H1 (cell line): ENCODE measurements at regions of chr22 and their contacts with region 1.

Region 1: GRCh38 chr22:42621505-42622002 is 6.9 kb upstream of the POLDIP3 start:
- DNase-seq: peak; percentile 86 to 94
- H3K4me3 ChIP-seq: no peak overlapping the region
- H3K27ac ChIP-seq: no peak overlapping the region
- H3K4me1 ChIP-seq: peaks cover 0 to 9% (median 7%) of the 10 kb centered on the region in 4 experiments; a peak in 6 of 7 replicates
- H3K27me3 ChIP-seq: no peaks in the 10 kb centered on the region
- CTCF ChIP-seq: peak; percentile 92 to 99 (median 98)
- EP300 ChIP-seq: no peak
- POLR2A ChIP-seq: no peak
- RAD21 ChIP-seq: peak; percentile 80 to 85

Region 2: GRCh38 chr22:42635531-42635930 is 14.0 kb after region 1 on chr22:
- CTCF ChIA-PET with region 1: interaction called, 43 read pairs
- POLR2A ChIA-PET with region 1: interaction called, 24 read pairs
- DNase-seq: no peak
- H3K4me3 ChIP-seq: no peak overlapping the region
- H3K27ac ChIP-seq: no peak overlapping the region
- H3K4me1 ChIP-seq: peaks cover 0 to 3% (median 1%) of the 10 kb centered on the region in 4 experiments; a peak in 2 of 7 replicates
- H3K27me3 ChIP-seq: no peaks in the 10 kb centered on the region
- CTCF ChIP-seq: no peak
- EP300 ChIP-seq: no peak
- POLR2A ChIP-seq: no peak
- RAD21 ChIP-seq: no peak

Region 3: GRCh38 chr22:42641801-42642413 is 20.4 kb after region 1 on chr22:
- CTCF ChIA-PET with region 1: interaction called, 33 read pairs
- POLR2A ChIA-PET with region 1: interaction called, 39 read pairs
- DNase-seq: no peak
- H3K4me3 ChIP-seq: no peak overlapping the region
- H3K27ac ChIP-seq: no peak overlapping the region
- H3K4me1 ChIP-seq: peaks cover 7 to 20% (median 14%) of the 10 kb centered on the region in 4 experiments
- H3K27me3 ChIP-seq: 0 out of 7 replicates have a peak, but pooled peaks cover 0 to 2% (median 0%) of the 10 kb centered on the region in 4 experiments
- CTCF ChIP-seq: no peak
- EP300 ChIP-seq: no peak
- POLR2A ChIP-seq: no peak
- RAD21 ChIP-seq: no peak

Region 4: GRCh38 chr22:42649246-42650099 is 27.9 kb after region 1 on chr22 and contains the start of gene CYB5R3:
- CTCF ChIA-PET with region 1: interaction called, 22 read pairs
- POLR2A ChIA-PET with region 1: interaction called, 74 read pairs
- DNase-seq: peak; percentile 50 to 90
- H3K4me3 ChIP-seq: peak within 1 kb of the TSS; percentile 82 to 98 (median 90)
- H3K27ac ChIP-seq: peak within 1 kb of the TSS; percentile 82; the same call in 1 of the 2 replicates
- H3K4me1 ChIP-seq: peaks cover 3 to 15% (median 11%) of the 10 kb centered on the region in 4 experiments
- H3K27me3 ChIP-seq: no peaks in the 10 kb centered on the region; a peak in 1 of 7 replicates
- CTCF ChIP-seq: no peak
- EP300 ChIP-seq: 0 out of 3 replicates have a peak, but pooled peaks of 1 of the 2 experiments have one; percentile 16
- POLR2A ChIP-seq: peak in 1 of 2 experiments; percentile 77; a peak in 2 of 3 replicates
- RAD21 ChIP-seq: no peak
- total RNA-seq, gene CYB5R3: 75.3 and 82.5 TPM in 2 replicates

Region 5: DNA sequence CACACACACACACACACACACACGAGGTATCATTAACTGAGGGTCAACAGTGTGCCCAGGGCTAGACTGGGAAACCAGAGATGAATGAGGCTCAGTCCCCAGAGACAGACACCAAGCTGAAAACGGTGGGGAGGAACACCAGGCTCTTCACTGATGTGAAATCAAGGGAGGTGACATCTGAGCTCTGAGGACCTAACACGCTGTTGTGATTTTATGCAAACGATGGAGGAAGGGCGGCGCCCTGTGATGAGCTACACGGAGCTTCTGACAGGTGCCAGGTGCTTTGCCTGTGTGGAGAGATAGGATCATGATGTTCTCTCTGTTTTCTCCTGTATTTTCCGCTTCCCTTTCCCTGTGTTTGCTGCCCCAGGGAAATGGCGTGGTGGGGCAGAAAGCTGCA is 34.1 kb after region 1 on chr22:
- CTCF ChIA-PET with region 1: interaction called, 22 read pairs
- POLR2A ChIA-PET with region 1: interaction called, 74 read pairs
- DNase-seq: no peak
- H3K4me3 ChIP-seq: no peak overlapping the region
- H3K27ac ChIP-seq: no peak overlapping the region
- H3K4me1 ChIP-seq: no peaks in the 10 kb centered on the region
- H3K27me3 ChIP-seq: no peaks in the 10 kb centered on the region
- CTCF ChIP-seq: no peak
- EP300 ChIP-seq: no peak
- POLR2A ChIP-seq: no peak
- RAD21 ChIP-seq: no peak

Region 6: GRCh38 chr22:42820066-42820763 is 198.7 kb after region 1 on chr22:
- CTCF ChIA-PET with region 1: interaction called, 16 read pairs
- POLR2A ChIA-PET with region 1: no interaction called
- DNase-seq: no peak
- H3K4me3 ChIP-seq: no peak overlapping the region
- H3K27ac ChIP-seq: no peak overlapping the region
- H3K4me1 ChIP-seq: no peaks in the 10 kb centered on the region
- H3K27me3 ChIP-seq: no peaks in the 10 kb centered on the region
- CTCF ChIP-seq: peak in 2 of 3 experiments; percentile 40 to 62; a peak in 2 of 4 replicates
- EP300 ChIP-seq: no peak
- POLR2A ChIP-seq: no peak
- RAD21 ChIP-seq: peak; percentile 70 to 73

Region 7: DNA sequence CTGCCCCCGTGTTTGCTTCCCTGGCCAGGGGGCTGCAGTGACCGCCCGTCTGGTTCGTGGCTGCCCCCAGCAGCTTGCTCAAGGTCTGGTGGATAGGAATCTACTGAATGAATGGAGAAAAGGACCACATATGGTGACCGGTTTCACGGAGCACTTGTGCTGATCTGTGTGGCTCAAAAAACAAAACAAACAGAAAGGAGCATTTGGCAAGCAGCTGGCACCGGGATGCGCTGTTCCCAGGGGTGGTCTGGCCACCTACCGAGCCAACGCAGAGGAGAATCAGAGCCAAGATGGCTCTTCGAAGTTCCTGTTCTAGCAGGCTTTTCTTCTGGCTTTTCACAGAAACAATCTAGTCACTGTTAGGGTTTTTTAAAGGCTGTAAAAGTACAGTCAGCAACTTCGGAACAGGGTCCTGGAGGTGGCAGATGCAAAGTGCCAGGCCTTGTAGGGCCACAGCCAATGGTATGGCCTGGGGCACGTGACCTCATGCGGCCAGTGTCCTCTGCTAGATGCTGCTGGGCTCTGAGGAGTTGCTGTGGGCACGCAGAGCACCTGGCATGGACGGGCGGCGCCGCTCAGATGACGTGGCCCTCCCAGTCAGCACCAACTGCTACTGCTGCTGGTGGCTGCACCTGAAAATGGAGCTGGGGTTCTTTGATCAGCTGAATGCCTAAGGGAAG is 420.7 kb after region 1 on chr22:
- CTCF ChIA-PET with region 1: no interaction called
- POLR2A ChIA-PET with region 1: no interaction called
- DNase-seq: no peak
- H3K4me3 ChIP-seq: no peak overlapping the region
- H3K27ac ChIP-seq: no peak overlapping the region
- H3K4me1 ChIP-seq: peaks cover 0 to 3% (median 0%) of the 10 kb centered on the region in 4 experiments; a peak in 2 of 7 replicates
- H3K27me3 ChIP-seq: no peaks in the 10 kb centered on the region
- CTCF ChIP-seq: no peak
- EP300 ChIP-seq: no peak
- POLR2A ChIP-seq: no peak
- RAD21 ChIP-seq: no peak